Spleen (tissue), 13 donors: ENCODE measurements at regions of chr13 and their contacts with region 1.

Region 1: GRCh38 chr13:51729866-51730546 is 74.0 kb downstream of the DHRS12 start:
- DNase-seq: no peak
- H3K4me3 ChIP-seq: no peak overlapping the region
- H3K27ac ChIP-seq: peak overlapping the region in 7 of 8 donors; percentile 2 to 68 (median 52)
- H3K4me1 ChIP-seq: peaks cover 0 to 42% (median 12%) of the 10 kb centered on the region in 6 donors
- H3K27me3 ChIP-seq: no peaks in the 10 kb centered on the region
- CTCF ChIP-seq: no peak
- POLR2A ChIP-seq: no peak

Region 2: DNA sequence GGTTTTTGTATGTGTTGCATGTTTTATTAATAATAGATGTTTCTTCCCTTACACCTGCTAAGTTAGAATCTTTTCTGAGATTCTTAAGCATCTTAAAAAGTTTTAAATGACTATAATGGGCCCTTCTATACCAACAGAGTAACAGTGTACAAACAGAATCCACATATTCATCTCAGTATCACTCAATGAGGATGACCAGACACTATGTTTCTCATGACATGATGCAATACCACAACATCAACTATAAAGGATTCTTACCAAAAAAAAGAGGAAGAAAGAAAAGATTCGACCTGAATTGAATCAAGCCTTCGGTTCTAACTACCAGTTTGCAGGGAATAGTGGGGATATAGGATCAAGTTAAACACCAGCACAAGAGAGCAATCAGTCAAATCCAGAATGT is 333.7 kb before region 1 on chr13:
- intact Hi-C with region 1: no loop called
- DNase-seq: no peak
- H3K4me3 ChIP-seq: no peak overlapping the region
- H3K27ac ChIP-seq: no peak overlapping the region
- H3K4me1 ChIP-seq: peaks cover 0 to 47% (median 10%) of the 10 kb centered on the region in 6 donors
- H3K27me3 ChIP-seq: no peaks in the 10 kb centered on the region
- CTCF ChIP-seq: no peak
- POLR2A ChIP-seq: no peak

Region 3: DNA sequence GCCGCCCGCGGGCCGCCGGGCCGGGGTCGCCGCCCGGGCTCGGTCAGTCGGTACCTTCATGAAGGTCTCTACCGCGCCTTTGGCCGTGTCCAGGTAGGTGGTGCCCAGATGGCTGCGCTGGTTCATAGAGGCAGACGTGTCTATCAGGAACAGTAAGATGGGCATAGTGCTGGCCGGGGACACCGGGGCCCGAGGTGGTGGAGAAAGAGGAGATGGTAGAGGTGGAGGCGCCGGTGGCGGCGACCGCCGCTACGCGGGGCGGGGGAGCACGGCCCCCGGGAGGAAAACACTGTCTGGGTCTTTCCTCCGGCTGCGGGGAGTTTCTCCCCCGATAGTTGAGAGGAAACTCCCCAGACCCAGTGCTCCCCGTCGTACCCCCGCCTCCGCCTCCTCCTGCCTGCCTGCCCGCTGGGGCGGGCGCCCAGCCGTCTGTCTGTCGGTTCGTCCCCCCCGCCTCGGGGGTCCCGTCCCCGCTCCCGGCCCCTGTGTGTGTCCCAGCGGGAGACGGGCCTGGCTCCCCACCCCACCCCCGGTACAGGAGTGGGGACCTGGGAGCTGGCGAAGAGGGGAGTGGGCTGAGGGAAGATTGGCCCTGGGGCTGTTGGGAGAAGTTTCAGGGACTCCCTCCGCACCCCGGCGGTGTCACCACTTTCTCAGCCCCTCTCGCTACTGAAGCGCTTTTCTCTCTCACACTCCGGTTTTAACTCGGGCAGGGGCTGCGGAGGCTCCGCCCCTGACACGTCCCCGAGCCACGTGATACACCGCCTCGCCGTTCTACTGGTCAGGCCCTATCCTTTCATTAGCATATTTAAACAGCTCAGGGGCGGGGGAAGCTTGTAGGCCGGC is 277.4 kb before region 1 on chr13 and contains the start of gene INTS6:
- intact Hi-C with region 1: loop called (anchors 5 kb)
- DNase-seq: peak; percentile 100
- H3K4me3 ChIP-seq: peak within 1 kb of the TSS; percentile 64 to 96 (median 80)
- H3K27ac ChIP-seq: peak within 1 kb of the TSS; percentile 97 to 100 (median 99)
- H3K4me1 ChIP-seq: peaks cover 28 to 77% (median 47%) of the 10 kb centered on the region in 6 donors
- H3K27me3 ChIP-seq: no peaks in the 10 kb centered on the region
- CTCF ChIP-seq: no peak
- POLR2A ChIP-seq: peak; percentile 99 to 100 (median 99)
- total RNA-seq, gene INTS6: 40.8 to 61.8 (median 51.0) TPM

Region 4: DNA sequence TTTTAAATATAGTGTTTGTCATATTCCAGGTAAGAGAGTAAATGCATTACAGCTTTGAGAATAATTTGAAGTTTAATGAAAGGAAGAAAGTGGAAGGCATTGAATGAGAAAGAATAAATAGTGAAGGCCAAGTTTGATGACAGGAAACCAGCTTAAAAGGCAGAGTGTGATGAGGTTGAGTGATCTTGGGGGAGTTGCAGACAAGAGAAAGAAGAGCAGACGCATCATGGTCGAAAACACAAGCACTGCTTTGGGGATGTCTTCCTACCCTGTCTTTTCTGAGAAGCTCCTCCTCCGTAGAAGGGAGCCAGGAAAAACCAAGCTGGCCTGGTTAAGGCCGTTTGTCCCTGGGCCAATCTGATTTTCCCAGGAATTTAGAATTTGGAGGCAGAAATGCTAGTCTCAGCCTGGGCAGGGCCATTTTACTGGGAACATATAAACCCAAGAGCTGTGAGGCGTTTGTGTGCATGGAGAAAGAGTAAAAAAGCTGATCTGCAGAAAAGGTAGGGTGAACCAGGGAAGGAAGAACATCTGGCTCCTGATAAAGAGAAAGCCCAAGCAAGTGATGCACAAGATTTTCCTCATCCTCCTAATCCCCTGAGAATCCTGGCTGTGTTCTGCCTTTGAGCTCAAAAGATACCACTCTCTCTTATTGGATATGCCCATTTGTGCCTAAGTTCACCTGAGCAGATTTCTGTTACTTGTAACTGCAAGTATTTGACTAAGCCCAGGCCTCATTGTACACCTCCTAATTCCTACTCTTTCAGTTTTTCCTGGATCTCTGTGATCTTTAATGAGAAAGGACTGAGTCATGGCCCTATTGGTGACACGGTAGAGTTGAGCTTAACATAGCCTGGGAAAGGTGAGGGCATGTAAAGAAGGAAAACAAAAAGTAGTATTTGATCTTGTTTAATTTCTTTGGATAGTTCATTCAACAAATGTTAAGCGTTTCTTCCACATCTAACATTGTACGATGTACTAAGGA is 65.7 kb before region 1 on chr13:
- intact Hi-C with region 1: loop called (anchors 10 kb)
- DNase-seq: no peak
- H3K4me3 ChIP-seq: no peak overlapping the region
- H3K27ac ChIP-seq: peak overlapping the region in 2 of 8 donors; percentile 3 to 11
- H3K4me1 ChIP-seq: peaks cover 0 to 15% (median 7%) of the 10 kb centered on the region in 6 donors
- H3K27me3 ChIP-seq: no peaks in the 10 kb centered on the region
- CTCF ChIP-seq: no peak
- POLR2A ChIP-seq: no peak